OCI-LY7 (cell line): ENCODE measurements at regions of chr21 and their contacts with region 1.

Region 1: DNA sequence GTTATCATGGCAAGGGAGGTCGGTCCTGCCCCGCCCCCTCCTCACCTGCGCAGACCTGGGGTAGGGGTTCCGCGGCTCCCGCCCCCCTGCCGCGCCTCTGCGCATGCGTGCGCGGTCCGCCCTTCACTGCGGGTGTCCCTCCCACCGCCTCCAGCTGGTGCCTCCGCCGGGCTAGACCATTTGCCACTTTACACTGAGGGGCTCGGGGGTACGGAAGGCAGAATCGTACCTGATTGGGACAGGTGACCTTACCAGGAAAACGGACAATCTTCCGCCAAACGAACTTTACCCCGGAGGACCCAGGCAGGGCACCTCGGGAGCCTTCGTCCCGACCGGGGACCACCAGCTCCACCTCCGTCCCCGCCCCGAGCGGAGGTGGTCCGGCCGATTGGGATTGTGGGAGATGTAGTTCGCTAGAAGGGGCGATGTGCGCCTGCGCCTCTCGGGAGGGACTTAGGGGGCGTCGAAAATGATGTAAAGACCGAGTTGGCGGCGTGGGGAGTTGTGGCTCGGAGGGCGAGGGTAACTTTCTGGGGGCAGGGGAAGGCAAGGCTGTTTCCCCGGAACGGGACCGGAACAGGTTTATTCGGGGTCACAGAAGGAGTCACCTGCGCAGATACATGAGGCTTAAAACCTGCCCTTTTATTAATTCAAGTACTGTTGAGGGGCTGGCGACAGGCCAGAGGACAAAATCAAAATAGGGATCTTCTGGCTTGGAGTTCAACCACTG is at the start of gene DNAJC28:
- DNase-seq: peak; percentile 96
- H3K4me3 ChIP-seq: peak within 1 kb of the TSS; percentile 72
- H3K27ac ChIP-seq: peak within 1 kb of the TSS; percentile 13
- H3K4me1 ChIP-seq: peaks cover 11% of the 10 kb centered on the region
- CTCF ChIP-seq: no peak
- total RNA-seq, gene DNAJC28: 0.44 and 1.3 TPM in 2 replicates

Region 2: GRCh38 chr21:33479679-33480480 is 11.7 kb before region 1 on chr21 and contains the start of gene TMEM50B:
- CTCF ChIA-PET with region 1: interaction called, 5 read pairs
- POLR2A ChIA-PET with region 1: interaction called, 43 read pairs
- intact Hi-C with region 1: no loop called
- DNase-seq: peak; percentile 96
- H3K4me3 ChIP-seq: peak within 1 kb of the TSS; percentile 88
- H3K27ac ChIP-seq: peak within 1 kb of the TSS; percentile 60
- H3K4me1 ChIP-seq: peaks cover 14% of the 10 kb centered on the region
- CTCF ChIP-seq: peak; percentile 42; the same call in 1 of the 2 replicates
- total RNA-seq, gene TMEM50B: 18.9 and 30.3 TPM in 2 replicates

Region 3: GRCh38 chr21:34822942-34823341 is 1331.4 kb after region 1 on chr21:
- CTCF ChIA-PET with region 1: no interaction called
- POLR2A ChIA-PET with region 1: no interaction called
- intact Hi-C with region 1: no loop called
- DNase-seq: no peak
- H3K4me3 ChIP-seq: no peak overlapping the region
- H3K27ac ChIP-seq: no peak overlapping the region
- H3K4me1 ChIP-seq: no peaks in the 10 kb centered on the region
- CTCF ChIP-seq: no peak